ENCODE measurements at regions of chr10 and their contacts with region 1.

Region 1: GRCh38 chr10:101095542-101096213 is 33.9 kb downstream of the KAZALD1 start:
- DNase-seq: peak; percentile 72 to 85 (median 80)
- ATAC-seq: peak; percentile 98
- H3K4me3 ChIP-seq: no peak overlapping the region
- H3K27ac ChIP-seq: no peak overlapping the region
- H3K4me1 ChIP-seq: peaks cover 0 to 7% of the 10 kb centered on the region in 2 experiments; a peak in 2 of 5 replicates
- H3K27me3 ChIP-seq: peaks cover 0 to 54% of the 10 kb centered on the region in 2 experiments; a peak in 2 of 5 replicates
- CTCF ChIP-seq: peak; percentile 76 to 82 (median 77)
- EP300 ChIP-seq: no peak
- POLR2A ChIP-seq: no peak
- RAD21 ChIP-seq: peak; percentile 51 to 62

Region 2: GRCh38 chr10:100872034-100872791 is 223.5 kb before region 1 on chr10:
- CTCF ChIA-PET with region 1: no interaction called
- POLR2A ChIA-PET with region 1: no interaction called
- in situ Hi-C with region 1: no loop called
- intact Hi-C with region 1: no loop called
- DNase-seq: peak; percentile 68 to 83 (median 78)
- ATAC-seq: peak; percentile 98
- H3K4me3 ChIP-seq: no peak overlapping the region
- H3K27ac ChIP-seq: no peak overlapping the region
- H3K4me1 ChIP-seq: no peaks in the 10 kb centered on the region; a peak in 1 of 5 replicates
- H3K27me3 ChIP-seq: peaks cover 2 to 39% of the 10 kb centered on the region in 2 experiments; a peak in 4 of 5 replicates
- CTCF ChIP-seq: peak; percentile 63 to 76 (median 72)
- EP300 ChIP-seq: no peak
- POLR2A ChIP-seq: no peak
- RAD21 ChIP-seq: peak; percentile 38 to 73

Region 3: DNA sequence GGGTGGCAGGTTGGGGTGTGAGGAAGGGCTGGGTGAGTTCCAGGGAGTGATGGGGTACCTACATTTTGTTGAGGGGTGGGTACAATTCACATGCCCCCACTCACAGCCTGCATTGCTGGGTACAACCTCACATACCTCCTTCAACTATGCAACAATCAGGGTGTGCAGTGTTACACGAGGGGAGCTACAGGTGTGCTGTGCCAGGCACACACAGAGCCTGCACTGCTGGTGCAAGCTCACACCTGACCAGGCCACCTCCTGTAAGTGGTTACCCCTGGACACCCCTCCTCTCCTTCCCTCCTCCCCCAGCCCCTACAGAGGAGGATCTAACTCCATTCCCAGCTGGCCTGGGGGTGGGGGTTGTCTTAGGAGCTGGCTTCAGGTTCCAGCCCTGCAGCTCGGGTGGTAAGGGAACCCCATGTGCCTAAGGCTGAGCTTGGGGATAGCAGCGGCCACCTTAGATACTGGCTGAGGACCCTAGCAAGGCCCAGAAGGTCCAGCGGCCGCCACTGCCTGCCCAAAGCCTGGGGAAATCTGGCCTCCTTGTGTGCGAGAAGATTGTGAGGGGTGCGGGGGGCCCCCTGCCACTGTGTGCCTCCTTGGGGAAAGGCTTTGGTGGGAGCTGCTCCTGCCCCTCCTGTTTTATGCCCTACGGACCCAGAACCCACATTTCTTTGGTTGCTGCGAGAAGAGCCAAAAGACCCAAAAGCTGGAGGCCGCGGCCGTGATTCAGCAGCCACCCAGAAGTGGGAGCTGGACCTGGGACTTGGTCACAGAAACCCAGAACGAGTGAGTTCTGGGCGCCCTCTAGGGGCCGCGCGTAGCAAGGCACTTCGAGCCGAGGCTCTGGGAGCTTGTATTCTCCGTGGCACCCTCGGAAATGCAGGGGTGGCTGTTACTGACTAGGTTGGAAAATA is 46.2 kb after region 1 on chr10:
- CTCF ChIA-PET with region 1: interaction called, 17 read pairs
- POLR2A ChIA-PET with region 1: interaction called, 4 read pairs
- in situ Hi-C with region 1: loop called (anchors 5 kb)
- intact Hi-C with region 1: loop called (anchors 1 kb)
- DNase-seq: peak; percentile 74 to 86 (median 78)
- ATAC-seq: peak; percentile 98
- H3K4me3 ChIP-seq: no peak overlapping the region
- H3K27ac ChIP-seq: no peak overlapping the region
- H3K4me1 ChIP-seq: peaks cover 0 to 24% of the 10 kb centered on the region in 2 experiments; a peak in 3 of 5 replicates
- H3K27me3 ChIP-seq: peaks cover 21 to 43% of the 10 kb centered on the region in 2 experiments; a peak in 4 of 5 replicates
- CTCF ChIP-seq: peak; percentile 88 to 93 (median 90)
- EP300 ChIP-seq: no peak
- POLR2A ChIP-seq: no peak
- RAD21 ChIP-seq: peak; percentile 78 to 85

Measured in K562 (cell line).